B cell (primary cell): ENCODE measurements at regions of chr1 and their contacts with region 1.

Region 1: DNA sequence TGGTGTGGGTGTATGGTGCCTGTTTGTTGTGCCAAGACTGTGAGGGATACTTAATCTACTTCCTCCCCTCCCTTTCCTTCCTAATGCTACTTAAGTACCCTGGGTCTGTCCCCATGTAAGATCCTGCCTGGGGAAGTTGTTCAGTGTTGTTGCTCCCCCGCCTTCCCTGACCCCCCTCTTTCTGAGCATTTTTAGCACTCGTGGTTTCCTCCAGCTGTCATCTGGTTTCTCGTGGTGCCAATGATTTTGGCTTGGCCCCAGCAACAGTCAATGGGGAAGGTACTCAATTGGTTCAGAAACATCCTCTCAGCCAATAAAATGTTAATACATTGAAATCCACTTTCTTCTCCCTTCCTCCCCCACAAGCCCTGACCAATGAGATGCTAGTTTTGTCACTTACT is 8.0 kb upstream of the B4GALT3 start:
- DNase-seq: peak; percentile 91
- ATAC-seq: peak; percentile 76
- H3K4me3 ChIP-seq: peak overlapping the region in 4 of 5 experiments; percentile 31 to 63 (median 36)
- H3K4me3 Mint-ChIP-seq: peak overlapping the region; percentile 71
- H3K27ac ChIP-seq: peak overlapping the region; percentile 86 to 94
- H3K27ac Mint-ChIP-seq: peak overlapping the region; percentile 93
- H3K4me1 ChIP-seq: peaks cover 73 to 93% of the 10 kb centered on the region in 2 donors
- H3K4me1 Mint-ChIP-seq: peaks cover 78% of the 10 kb centered on the region
- H3K27me3 ChIP-seq: no peaks in the 10 kb centered on the region
- H3K27me3 Mint-ChIP-seq: no peaks in the 10 kb centered on the region
- CTCF ChIP-seq: no peak

Region 2: GRCh38 chr1:160315359-160315758 is 869.9 kb before region 1 on chr1:
- CTCF ChIA-PET with region 1: no interaction called
- POLR2A ChIA-PET with region 1: no interaction called
- intact Hi-C with region 1: no loop called
- DNase-seq: no peak
- ATAC-seq: no peak
- H3K4me3 ChIP-seq: no peak overlapping the region
- H3K4me3 Mint-ChIP-seq: no peak overlapping the region
- H3K27ac ChIP-seq: no peak overlapping the region
- H3K27ac Mint-ChIP-seq: no peak overlapping the region
- H3K4me1 ChIP-seq: no peaks in the 10 kb centered on the region
- H3K4me1 Mint-ChIP-seq: peaks cover 2% of the 10 kb centered on the region
- H3K27me3 ChIP-seq: no peaks in the 10 kb centered on the region
- H3K27me3 Mint-ChIP-seq: no peaks in the 10 kb centered on the region
- CTCF ChIP-seq: no peak

Region 3: DNA sequence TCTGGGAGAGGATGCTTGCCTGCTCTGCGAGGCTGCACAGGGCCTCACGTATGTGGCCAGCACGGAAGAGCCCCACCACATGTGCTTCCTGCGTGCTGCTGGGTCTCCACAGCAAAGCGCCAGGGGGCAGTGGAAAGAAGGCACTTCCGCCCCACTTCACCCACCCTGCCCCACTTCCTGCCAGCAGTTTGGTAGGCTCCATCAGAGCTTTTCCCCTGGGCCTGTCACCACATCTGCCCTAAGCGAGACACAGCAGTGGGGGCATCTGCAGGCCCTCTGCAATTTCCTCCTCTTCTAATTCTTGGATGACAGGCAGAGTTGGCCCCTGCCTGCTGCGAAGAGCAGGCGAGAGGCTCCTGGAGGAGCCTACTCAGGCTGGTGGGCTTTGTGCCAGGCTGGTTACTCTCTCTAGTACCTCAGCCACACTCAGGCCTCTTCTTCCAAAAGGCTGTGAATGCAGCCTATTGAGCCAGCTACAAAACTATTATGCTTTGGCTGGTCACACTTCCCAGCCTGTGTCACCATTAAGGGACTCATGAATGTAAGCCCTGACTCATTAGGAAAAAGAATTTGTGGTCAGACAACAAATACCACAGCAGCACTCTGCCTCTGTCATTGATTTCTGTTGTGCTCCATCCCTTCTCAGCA is 347.6 kb before region 1 on chr1:
- CTCF ChIA-PET with region 1: no interaction called
- POLR2A ChIA-PET with region 1: interaction called, 15 read pairs
- intact Hi-C with region 1: no loop called
- DNase-seq: peak; percentile 91
- ATAC-seq: peak; percentile 97
- H3K4me3 ChIP-seq: peak overlapping the region in 1 of 5 experiments; percentile 30
- H3K4me3 Mint-ChIP-seq: peak overlapping the region; percentile 41
- H3K27ac ChIP-seq: peak overlapping the region; percentile 71 to 72
- H3K27ac Mint-ChIP-seq: peak overlapping the region; percentile 90
- H3K4me1 ChIP-seq: peaks cover 33 to 34% of the 10 kb centered on the region in 2 donors
- H3K4me1 Mint-ChIP-seq: peaks cover 41% of the 10 kb centered on the region
- H3K27me3 ChIP-seq: no peaks in the 10 kb centered on the region
- H3K27me3 Mint-ChIP-seq: no peaks in the 10 kb centered on the region
- CTCF ChIP-seq: peak; percentile 65

Region 4: DNA sequence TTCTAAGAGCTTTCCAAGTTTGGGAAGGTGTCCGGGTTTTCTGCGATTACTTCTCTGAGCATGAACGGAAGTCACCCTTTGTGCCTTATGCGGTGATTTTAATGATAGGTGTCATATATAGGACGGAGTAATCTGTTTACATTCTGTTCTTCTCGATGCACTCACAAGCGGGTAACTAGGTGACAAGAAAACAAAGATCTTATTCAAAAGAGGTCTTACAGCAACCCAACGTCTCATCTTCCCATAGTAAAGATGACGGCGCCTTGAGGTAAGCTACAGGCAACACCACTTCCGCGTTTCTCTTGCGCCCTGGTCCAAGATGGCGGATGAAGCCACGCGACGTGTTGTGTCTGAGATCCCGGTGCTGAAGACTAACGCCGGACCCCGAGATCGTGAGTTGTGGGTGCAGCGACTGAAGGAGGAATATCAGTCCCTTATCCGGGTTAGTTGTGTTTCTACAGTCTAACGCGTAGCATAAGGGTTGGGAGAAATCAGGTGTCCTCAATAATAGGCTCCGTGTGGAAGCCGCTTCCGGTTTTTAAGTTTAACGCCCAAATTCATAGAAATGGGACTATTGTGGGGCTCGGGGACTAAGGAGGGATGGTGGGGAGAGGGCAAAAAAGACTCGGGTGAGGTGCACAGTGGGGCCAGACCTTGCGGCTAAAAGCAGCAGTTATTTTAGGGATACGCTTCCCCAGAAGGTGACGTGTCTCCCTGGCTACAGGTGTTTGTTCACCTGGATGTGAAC is 31.4 kb before region 1 on chr1 and contains the start of gene UFC1:
- CTCF ChIA-PET with region 1: interaction called, 3 read pairs
- POLR2A ChIA-PET with region 1: interaction called, 13 read pairs
- intact Hi-C with region 1: loop called (anchors 5 kb)
- DNase-seq: peak; percentile 94
- ATAC-seq: peak; percentile 97
- H3K4me3 ChIP-seq: peak within 1 kb of the TSS; percentile 88 to 100 (median 90)
- H3K4me3 Mint-ChIP-seq: peak within 1 kb of the TSS; percentile 97
- H3K27ac ChIP-seq: peak within 1 kb of the TSS; percentile 95 to 98
- H3K27ac Mint-ChIP-seq: peak within 1 kb of the TSS; percentile 99
- H3K4me1 ChIP-seq: peaks cover 15 to 17% of the 10 kb centered on the region in 2 donors
- H3K4me1 Mint-ChIP-seq: peaks cover 26% of the 10 kb centered on the region
- H3K27me3 ChIP-seq: no peaks in the 10 kb centered on the region
- H3K27me3 Mint-ChIP-seq: no peaks in the 10 kb centered on the region
- CTCF ChIP-seq: no peak
- total RNA-seq, gene UFC1: 78.1 and 91.0 TPM in 2 replicates

Region 5: GRCh38 chr1:161314201-161314981 is 129.1 kb after region 1 on chr1 and contains the start of gene SDHC:
- CTCF ChIA-PET with region 1: no interaction called
- POLR2A ChIA-PET with region 1: no interaction called
- intact Hi-C with region 1: loop called (anchors 1 kb)
- DNase-seq: peak; percentile 93
- ATAC-seq: peak; percentile 95
- H3K4me3 ChIP-seq: peak within 1 kb of the TSS; percentile 87 to 97 (median 94)
- H3K4me3 Mint-ChIP-seq: peak within 1 kb of the TSS; percentile 90
- H3K27ac ChIP-seq: peak within 1 kb of the TSS; percentile 88 to 97
- H3K27ac Mint-ChIP-seq: peak within 1 kb of the TSS; percentile 93
- H3K4me1 ChIP-seq: peaks cover 8 to 15% of the 10 kb centered on the region in 2 donors
- H3K4me1 Mint-ChIP-seq: peaks cover 25% of the 10 kb centered on the region
- H3K27me3 ChIP-seq: no peaks in the 10 kb centered on the region
- H3K27me3 Mint-ChIP-seq: no peaks in the 10 kb centered on the region
- CTCF ChIP-seq: peak; percentile 21
- total RNA-seq, gene SDHC: 99.0 and 109 TPM in 2 replicates

Region 6: GRCh38 chr1:161359291-161359690 is 174.0 kb after region 1 on chr1:
- CTCF ChIA-PET with region 1: no interaction called
- POLR2A ChIA-PET with region 1: no interaction called
- intact Hi-C with region 1: no loop called
- DNase-seq: no peak
- ATAC-seq: no peak
- H3K4me3 ChIP-seq: no peak overlapping the region
- H3K4me3 Mint-ChIP-seq: no peak overlapping the region
- H3K27ac ChIP-seq: no peak overlapping the region
- H3K27ac Mint-ChIP-seq: no peak overlapping the region
- H3K4me1 ChIP-seq: no peaks in the 10 kb centered on the region
- H3K4me1 Mint-ChIP-seq: peaks cover 2% of the 10 kb centered on the region
- H3K27me3 ChIP-seq: no peaks in the 10 kb centered on the region
- H3K27me3 Mint-ChIP-seq: no peaks in the 10 kb centered on the region
- CTCF ChIP-seq: no peak